Dendritic cell treated with granulocyte-macrophage colony-stimulating factor and Interleukin-4, amounts not matched to agents 40 ng/mL and 50 ng/mL, for 4 days (primary cell): ENCODE measurements at regions of chr2 and their contacts with region 1.

Region 1: DNA sequence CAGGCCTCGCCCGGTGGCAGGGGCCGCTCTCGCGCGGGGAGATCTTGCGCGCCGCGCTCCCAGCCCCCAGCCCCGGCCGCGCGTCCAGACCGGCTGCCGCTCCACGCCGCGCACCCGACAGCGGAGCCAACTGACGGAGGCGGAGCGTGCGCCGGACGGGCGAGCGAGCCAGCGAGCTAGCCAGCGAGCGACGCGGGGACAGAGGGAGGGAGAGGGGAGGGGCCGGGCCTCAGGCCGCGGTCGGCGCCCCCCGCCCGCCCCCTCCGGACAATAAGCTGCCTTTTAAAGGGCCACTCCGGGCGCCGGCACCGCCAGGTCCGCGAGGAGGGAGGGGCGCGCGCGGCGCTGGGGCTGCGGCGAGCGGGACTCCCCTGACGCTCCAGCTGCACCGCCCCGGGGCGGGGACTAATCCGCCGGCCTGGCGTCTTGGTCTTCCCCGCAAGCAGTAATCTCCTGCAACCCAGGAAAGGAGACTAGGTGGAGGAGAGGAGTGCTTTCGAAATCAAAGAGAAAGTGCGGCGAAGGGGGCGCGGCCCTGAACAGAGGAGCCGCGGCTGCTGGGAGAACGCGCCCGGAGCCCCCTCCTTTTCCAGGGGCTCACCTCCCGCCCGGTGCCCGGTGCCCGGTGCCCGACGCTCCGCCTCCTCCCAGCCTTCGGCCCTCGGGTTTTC is at the start of gene BIN1:
- H3K4me3 Mint-ChIP-seq: peak within 1 kb of the TSS; percentile 87
- H3K27ac Mint-ChIP-seq: peak within 1 kb of the TSS; percentile 58
- H3K4me1 Mint-ChIP-seq: peaks cover 21% of the 10 kb centered on the region
- H3K27me3 Mint-ChIP-seq: peaks cover 46% of the 10 kb centered on the region

Region 2: GRCh38 chr2:127067620-127068350 is 39.3 kb before region 1 on chr2:
- intact Hi-C with region 1: loop called (anchors 2 kb)
- H3K4me3 Mint-ChIP-seq: no peak overlapping the region
- H3K27ac Mint-ChIP-seq: peak overlapping the region; percentile 94
- H3K4me1 Mint-ChIP-seq: peaks cover 53% of the 10 kb centered on the region
- H3K27me3 Mint-ChIP-seq: peaks cover 14% of the 10 kb centered on the region

Region 3: GRCh38 chr2:127078666-127079270 is 28.3 kb before region 1 on chr2:
- intact Hi-C with region 1: no loop called
- H3K4me3 Mint-ChIP-seq: no peak overlapping the region
- H3K27ac Mint-ChIP-seq: no peak overlapping the region
- H3K4me1 Mint-ChIP-seq: peaks cover 50% of the 10 kb centered on the region
- H3K27me3 Mint-ChIP-seq: peaks cover 42% of the 10 kb centered on the region

Region 4: GRCh38 chr2:127174136-127174535 is 67.0 kb after region 1 on chr2:
- intact Hi-C with region 1: loop called (anchors 10 kb)
- H3K4me3 Mint-ChIP-seq: no peak overlapping the region
- H3K27ac Mint-ChIP-seq: no peak overlapping the region
- H3K4me1 Mint-ChIP-seq: peaks cover 60% of the 10 kb centered on the region
- H3K27me3 Mint-ChIP-seq: no peaks in the 10 kb centered on the region